Posterior cingulate gyrus (tissue), 11 donors: ENCODE measurements at regions of chr7 and their contacts with region 1.

Region 1: DNA sequence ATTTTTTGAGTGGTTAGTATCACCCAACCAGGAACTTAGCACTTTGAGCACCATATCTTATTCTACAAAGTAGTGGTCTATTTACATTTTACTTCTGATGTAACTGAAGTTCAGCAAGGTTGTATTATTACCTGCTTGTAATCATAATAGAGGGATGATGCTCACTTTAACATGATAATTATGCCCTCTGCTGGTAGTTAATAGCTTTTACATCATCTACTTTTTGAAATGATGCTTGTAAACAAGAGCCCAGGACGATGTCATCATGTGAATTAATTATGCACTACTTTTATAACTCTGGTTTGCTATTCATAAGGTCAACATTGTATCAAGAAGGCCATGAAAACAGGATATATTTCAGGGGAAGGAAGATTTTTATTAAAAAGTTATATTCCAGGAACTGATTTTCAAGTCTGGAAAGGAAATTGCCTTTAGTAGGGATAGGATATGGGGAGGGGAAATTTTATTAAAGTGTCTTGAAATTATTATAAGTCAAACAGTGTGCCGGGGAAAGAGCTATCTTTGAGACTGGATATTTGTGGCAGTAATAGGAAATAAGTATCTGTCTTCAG is 80.3 kb upstream of the SCIN start:
- DNase-seq: no peak

Region 2: DNA sequence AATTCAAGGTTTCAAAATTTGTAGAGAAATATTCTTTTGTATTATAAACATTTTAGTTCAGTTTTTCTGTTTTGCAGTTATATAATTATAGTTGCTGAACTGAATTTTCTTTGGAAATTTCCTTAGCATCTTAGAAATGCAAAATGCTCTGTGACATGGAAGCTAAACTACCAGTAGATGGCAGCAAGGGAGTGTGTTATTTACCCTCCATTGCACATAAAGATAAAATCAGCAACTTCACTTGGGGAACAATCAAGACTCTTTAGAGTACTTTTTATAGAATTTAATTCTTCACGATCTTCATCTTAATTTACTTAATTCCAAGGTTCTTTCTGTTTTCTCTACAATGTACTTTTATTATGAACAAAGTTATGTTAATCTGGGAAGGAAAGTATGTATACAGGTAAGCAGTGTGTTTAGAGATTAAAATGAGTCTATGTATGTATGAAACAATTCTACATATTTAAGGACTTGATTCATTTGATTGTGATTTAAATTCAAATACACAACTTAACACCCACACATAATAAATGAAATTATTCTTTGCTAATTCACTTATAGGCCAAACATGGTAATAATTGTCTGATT is 1062.4 kb before region 1 on chr7:
- intact Hi-C with region 1: loop called (anchors 5 kb)
- DNase-seq: no peak

Region 3: DNA sequence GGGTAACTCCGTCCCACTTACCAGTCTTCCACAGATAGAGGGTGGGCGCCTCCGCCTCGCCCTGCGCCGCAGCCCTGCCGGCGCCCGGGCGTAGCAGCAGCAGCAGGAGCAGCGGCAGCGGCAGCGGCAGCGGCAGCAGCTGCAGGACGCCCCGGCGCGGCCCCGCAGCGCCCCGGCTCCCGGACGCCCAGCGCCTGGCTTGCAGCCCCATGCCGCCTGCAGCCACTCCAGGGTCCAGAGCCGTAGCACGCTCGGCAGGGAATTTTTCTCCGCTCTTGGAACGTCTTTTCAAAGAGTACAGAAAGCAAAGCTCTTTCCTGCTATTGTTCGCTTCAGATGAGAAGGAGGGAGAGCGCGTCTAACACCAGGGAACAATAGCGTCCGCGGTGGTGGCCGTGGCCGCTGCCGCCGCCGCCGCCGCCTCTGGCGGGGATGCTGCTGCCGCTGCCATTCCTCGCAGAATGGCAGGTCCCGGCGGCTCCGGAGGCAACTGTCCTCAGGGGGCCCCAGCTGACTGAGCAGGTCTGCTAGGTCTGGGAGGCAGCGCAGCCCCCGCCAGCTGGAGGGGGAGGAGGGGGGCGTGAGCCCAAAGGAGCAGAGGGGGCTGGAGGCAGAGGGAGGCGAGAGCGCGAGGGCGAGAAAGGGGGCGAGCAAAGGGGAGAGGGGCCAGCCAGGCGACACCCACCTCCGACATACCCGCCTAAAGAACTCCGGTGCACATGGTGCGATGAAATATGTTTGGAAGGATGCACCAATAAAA is 658.3 kb before region 1 on chr7 and contains the start of gene THSD7A:
- intact Hi-C with region 1: loop called (anchors 10 kb)
- DNase-seq: peak; percentile 21 to 92 (median 40)

Region 4: DNA sequence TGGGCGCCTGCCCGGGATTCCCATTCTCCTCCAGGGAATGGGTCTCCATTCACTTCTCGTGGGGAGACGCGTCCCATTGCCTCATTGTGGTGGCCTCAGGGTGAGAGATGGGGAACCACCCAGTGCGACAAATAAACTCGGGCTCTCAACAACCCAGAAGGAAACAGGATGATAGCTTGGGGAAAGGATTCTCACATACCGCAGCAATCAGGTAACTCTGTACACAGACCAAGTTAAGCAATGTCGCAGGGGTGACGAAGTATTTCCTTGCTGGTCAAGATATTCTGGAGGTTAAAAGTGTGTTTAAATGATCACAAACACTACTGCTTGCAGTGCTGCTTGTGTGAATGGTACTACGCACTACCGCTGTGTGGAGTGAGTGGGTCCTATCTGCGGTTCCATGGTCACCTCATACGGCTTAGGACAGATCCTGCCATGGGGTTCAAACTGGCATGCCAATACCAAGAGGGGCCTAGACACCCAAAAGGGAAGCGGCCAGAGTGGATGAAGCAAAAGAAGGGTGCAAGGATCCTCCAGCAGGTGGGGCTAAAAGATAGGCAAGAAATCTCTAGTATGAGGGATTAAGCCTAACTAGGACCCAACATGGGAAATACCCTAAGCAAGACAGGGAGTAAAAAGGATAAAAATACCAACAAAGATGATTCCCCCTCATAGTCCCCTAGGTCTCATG is 422.9 kb before region 1 on chr7:
- intact Hi-C with region 1: loop called (anchors 10 kb)
- DNase-seq: peak in 4 of 10 donors; percentile 17 to 39 (median 28)

Region 5: GRCh38 chr7:12389089-12389700 is 101.0 kb before region 1 on chr7:
- intact Hi-C with region 1: loop called (anchors 10 kb)
- DNase-seq: peak in 5 of 10 donors; percentile 14 to 82 (median 24)

Region 6: DNA sequence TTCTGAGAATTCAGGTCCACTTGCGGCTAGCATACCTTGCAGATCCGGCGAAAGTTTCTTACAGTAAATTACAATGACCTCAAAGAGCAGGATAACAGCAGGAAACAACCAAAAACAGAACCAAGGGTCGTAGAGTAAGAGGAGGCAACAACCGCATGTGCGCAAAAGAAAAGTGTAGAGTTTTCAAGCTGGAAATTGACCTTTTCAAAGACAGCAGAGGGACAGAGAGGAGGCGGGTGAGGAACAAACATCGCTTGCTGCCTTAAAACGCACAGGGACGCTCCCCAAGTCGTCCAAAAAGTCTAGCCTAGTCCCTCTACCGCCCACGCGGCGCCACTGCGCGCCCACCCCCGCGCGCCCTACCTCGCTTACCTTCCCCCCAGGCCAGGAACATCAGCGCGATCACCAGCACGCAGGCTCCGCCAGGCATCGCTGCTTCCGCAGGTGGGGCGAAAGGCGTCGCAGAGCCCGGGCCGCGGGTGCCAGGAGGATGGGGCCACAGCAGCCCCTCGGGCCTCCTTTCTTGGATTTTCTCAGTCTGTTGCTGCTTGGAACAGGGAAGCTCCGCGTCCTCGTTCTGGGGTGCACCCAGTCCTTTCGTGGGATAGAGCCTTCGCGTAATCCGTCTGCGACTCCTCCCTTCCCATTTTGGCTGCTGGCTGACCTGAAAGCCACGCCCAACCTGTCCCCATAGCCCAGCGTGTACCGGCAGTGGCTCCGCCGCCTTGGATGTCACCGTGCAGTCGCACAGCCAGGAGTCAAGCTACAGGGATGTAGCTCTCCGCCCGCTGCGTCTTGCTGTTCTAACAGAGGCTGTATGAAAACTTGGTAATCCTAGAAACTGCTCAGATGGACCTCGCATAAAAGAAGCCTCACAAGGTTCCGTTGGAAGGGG is 86.7 kb before region 1 on chr7 and contains the start of gene VWDE:
- intact Hi-C with region 1: no loop called
- DNase-seq: peak in 8 of 10 donors; percentile 33 to 92 (median 60)

Region 7: DNA sequence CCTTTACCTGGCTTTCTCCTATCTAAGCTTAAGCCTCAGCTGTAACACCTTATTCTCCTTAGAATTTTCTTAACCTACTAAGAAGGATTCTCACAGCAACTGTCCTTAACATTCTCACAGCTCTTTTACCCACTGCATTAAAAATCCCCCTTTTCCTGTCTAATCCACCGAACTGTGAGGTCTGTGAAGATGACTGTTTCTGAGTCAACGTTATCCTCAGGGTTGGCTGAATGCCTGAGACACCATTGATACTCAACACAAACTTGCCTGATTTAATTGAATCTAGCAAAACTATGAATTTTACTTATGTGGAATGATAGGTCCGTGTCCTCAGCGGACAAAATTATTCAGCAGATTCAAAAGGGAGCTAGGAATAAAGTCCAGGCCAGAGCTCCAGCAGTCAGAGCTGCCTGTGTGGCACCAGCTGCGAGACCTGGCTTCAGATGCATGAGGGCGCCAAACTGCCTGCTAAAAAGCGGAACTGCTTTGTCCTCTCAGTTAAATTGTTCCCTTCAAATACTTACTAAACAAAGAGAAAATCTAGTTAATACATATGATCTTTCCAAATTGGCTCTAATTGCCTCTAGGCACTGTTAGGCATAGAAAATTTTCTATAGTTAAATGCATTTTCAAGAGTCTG is 53.2 kb before region 1 on chr7:
- intact Hi-C with region 1: loop called (anchors 10 kb)
- DNase-seq: peak in 9 of 10 donors; percentile 11 to 86 (median 23)

Region 8: GRCh38 chr7:12458520-12459131 is 31.6 kb before region 1 on chr7:
- intact Hi-C with region 1: loop called (anchors 5 kb)
- DNase-seq: no peak